ENCODE measurements at regions of chr15 and their contacts with region 1.

Region 1: GRCh38 chr15:42056934-42057779 is 36.3 kb upstream of the PLA2G4E start:
- DNase-seq: peak; percentile 81 to 92 (median 86)
- ATAC-seq: peak; percentile 69 to 85 (median 73)
- H3K4me3 ChIP-seq: peak overlapping the region in 2 of 4 donors; percentile 27
- H3K27ac ChIP-seq: peak overlapping the region; percentile 6 to 89 (median 80)
- H3K4me1 ChIP-seq: peaks cover 24 to 38% (median 36%) of the 10 kb centered on the region in 3 donors
- H3K27me3 ChIP-seq: no peaks in the 10 kb centered on the region
- CTCF ChIP-seq: peak in 2 of 4 donors; percentile 16 to 20

Region 2: GRCh38 chr15:41989259-41989933 is 67.8 kb before region 1 on chr15:
- intact Hi-C with region 1: loop called in 2 of 3 experiments (anchors 5 kb)
- DNase-seq: peak; percentile 76 to 98 (median 92)
- ATAC-seq: peak; percentile 96 to 99 (median 98)
- H3K4me3 ChIP-seq: no peak overlapping the region
- H3K27ac ChIP-seq: no peak overlapping the region
- H3K4me1 ChIP-seq: no peaks in the 10 kb centered on the region
- H3K27me3 ChIP-seq: no peaks in the 10 kb centered on the region
- CTCF ChIP-seq: peak; percentile 94 to 99 (median 98)

Region 3: GRCh38 chr15:42575188-42576039 is 518.3 kb after region 1 on chr15 and contains the start of gene STARD9:
- intact Hi-C with region 1: no loop called
- DNase-seq: peak; percentile 96 to 98 (median 97)
- ATAC-seq: peak; percentile 95 to 99 (median 98)
- H3K4me3 ChIP-seq: peak within 1 kb of the TSS; percentile 53 to 71 (median 60)
- H3K27ac ChIP-seq: peak within 1 kb of the TSS in 3 of 4 donors; percentile 0 to 48 (median 16)
- H3K4me1 ChIP-seq: peaks cover 0 to 4% (median 0%) of the 10 kb centered on the region in 3 donors
- H3K27me3 ChIP-seq: no peaks in the 10 kb centered on the region
- CTCF ChIP-seq: no peak
- total RNA-seq, gene STARD9: 0.44 to 2.0 (median 1.0) TPM